CD14-positive monocyte (primary cell): ENCODE measurements at regions of chr19 and their contacts with region 1.

Region 1: DNA sequence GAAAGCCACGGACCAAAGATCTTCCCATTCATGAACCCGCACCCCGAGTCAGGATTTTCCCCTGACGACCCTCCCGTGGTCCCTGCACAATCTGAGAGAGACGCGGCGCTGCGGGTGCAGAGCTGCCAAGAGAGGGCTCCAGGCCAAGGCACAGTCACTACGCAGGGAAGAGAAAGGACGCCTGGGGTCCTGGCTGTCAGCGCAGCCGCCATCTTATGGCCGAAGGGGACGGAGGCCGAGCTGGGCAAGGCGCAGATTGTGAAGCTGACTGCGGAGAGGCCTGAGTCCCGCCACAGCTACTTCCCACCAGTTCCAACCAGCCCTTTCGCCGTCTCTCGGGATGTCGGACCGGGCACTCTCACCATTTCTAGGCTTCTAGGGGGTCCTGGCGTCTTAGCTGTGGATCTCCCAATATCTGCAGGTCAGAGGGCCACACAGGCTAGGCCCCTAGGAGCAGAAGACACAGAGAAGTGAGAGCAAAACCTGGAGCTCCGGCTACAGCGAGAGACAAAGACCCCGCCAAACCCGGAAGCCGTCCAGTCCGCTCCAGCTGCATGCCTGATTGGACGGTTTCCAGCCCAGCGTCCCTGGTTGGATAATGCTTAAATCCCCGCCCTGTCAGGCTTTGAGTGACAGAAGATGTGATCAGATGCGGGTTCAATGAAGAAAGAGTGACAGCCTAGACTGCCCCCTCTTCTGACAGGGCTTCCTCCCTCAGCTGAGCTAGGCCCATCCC is at the start of gene ZNF100:
- DNase-seq: peak; percentile 84 to 89 (median 86)
- H3K4me3 ChIP-seq: peak within 1 kb of the TSS; percentile 86 to 98 (median 95)
- H3K4me3 Mint-ChIP-seq: peak within 1 kb of the TSS; percentile 99 to 100
- H3K27ac ChIP-seq: peak within 1 kb of the TSS; percentile 95 to 98
- H3K27ac Mint-ChIP-seq: peak within 1 kb of the TSS; percentile 95 to 99 (median 98)
- H3K4me1 ChIP-seq: peaks cover 12 to 14% of the 10 kb centered on the region in 2 donors
- H3K4me1 Mint-ChIP-seq: peaks cover 12% of the 10 kb centered on the region
- H3K27me3 ChIP-seq: no peaks in the 10 kb centered on the region
- H3K27me3 Mint-ChIP-seq: no peaks in the 10 kb centered on the region
- CTCF ChIP-seq: no peak
- polyA plus RNA-seq, gene ZNF100: 2.1 to 10.8 (median 8.6) TPM

Region 2: GRCh38 chr19:21824679-21825078 is 57.4 kb after region 1 on chr19:
- intact Hi-C with region 1: no loop called
- DNase-seq: no peak
- H3K4me3 ChIP-seq: no peak overlapping the region
- H3K4me3 Mint-ChIP-seq: no peak overlapping the region
- H3K27ac ChIP-seq: no peak overlapping the region
- H3K27ac Mint-ChIP-seq: no peak overlapping the region
- H3K4me1 ChIP-seq: no peaks in the 10 kb centered on the region
- H3K4me1 Mint-ChIP-seq: no peaks in the 10 kb centered on the region
- H3K27me3 ChIP-seq: no peaks in the 10 kb centered on the region
- H3K27me3 Mint-ChIP-seq: peaks cover 0 to 3% (median 0%) of the 10 kb centered on the region in 3 donors
- CTCF ChIP-seq: no peak

Region 3: GRCh38 chr19:21835810-21836444 is 68.7 kb after region 1 on chr19 and contains the start of gene ZNF43:
- intact Hi-C with region 1: loop called (anchors 5 to 10 kb)
- DNase-seq: peak; percentile 81 to 86 (median 84)
- H3K4me3 ChIP-seq: peak within 1 kb of the TSS; percentile 59 to 92 (median 63)
- H3K4me3 Mint-ChIP-seq: peak within 1 kb of the TSS; percentile 98 to 99
- H3K27ac ChIP-seq: peak within 1 kb of the TSS; percentile 92 to 95
- H3K27ac Mint-ChIP-seq: peak within 1 kb of the TSS; percentile 98 to 100 (median 99)
- H3K4me1 ChIP-seq: peaks cover 13 to 18% of the 10 kb centered on the region in 2 donors
- H3K4me1 Mint-ChIP-seq: peaks cover 4% of the 10 kb centered on the region
- H3K27me3 ChIP-seq: no peaks in the 10 kb centered on the region
- H3K27me3 Mint-ChIP-seq: peaks cover 0 to 3% (median 0%) of the 10 kb centered on the region in 3 donors
- CTCF ChIP-seq: no peak
- polyA plus RNA-seq, gene ZNF43: 1.1 to 3.0 (median 3.0) TPM

Region 4: DNA sequence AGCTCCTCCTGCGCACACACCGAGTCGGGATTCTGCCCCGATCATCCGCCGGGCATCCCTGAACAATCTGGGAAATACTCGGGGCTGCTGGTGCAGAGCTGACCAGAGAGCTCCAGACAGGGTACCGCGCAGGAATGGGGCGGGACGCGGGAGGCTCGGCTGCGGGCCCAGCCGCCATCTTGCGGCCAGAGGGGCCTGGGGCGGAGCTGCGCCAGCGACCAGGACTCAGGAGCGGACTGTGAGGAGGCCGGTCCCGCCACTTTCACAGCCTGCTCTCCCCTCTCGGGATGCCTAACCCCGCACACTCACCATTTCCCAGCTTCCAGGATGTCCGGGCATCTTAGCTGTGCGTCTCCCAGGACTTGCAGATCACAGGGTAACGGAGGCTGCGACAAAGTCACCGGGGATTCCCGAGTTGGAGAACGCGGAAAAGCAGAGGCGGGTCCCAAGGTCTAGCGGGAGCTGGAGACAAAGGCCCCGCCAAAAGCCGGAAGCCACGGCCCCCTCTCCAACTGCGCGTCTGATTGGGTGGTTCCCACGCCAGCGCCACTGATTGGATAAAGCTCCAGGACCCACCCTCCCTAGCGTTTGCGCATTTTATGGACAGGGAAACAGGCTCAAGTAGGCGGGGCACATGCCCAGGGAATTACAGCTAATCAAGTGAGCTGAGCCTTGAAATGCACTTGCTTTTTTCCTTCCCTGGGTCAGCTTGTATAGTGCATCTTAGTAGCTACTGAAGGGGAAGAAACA is 84.5 kb after region 1 on chr19:
- intact Hi-C with region 1: loop called in 1 of 2 experiments (anchors 5 kb)
- DNase-seq: peak; percentile 81 to 88 (median 82)
- H3K4me3 ChIP-seq: peak overlapping the region; percentile 80 to 99 (median 88)
- H3K4me3 Mint-ChIP-seq: peak overlapping the region; percentile 96 to 98
- H3K27ac ChIP-seq: peak overlapping the region; percentile 73 to 89
- H3K27ac Mint-ChIP-seq: peak overlapping the region; percentile 80 to 91 (median 85)
- H3K4me1 ChIP-seq: peaks cover 5 to 15% of the 10 kb centered on the region in 2 donors
- H3K4me1 Mint-ChIP-seq: peaks cover 11% of the 10 kb centered on the region
- H3K27me3 ChIP-seq: no peaks in the 10 kb centered on the region
- H3K27me3 Mint-ChIP-seq: peaks cover 0 to 2% (median 0%) of the 10 kb centered on the region in 3 donors
- CTCF ChIP-seq: no peak